Common myeloid progenitor, CD34-positive (primary cell): ENCODE measurements at regions of chr19 and their contacts with region 1.

Region 1: DNA sequence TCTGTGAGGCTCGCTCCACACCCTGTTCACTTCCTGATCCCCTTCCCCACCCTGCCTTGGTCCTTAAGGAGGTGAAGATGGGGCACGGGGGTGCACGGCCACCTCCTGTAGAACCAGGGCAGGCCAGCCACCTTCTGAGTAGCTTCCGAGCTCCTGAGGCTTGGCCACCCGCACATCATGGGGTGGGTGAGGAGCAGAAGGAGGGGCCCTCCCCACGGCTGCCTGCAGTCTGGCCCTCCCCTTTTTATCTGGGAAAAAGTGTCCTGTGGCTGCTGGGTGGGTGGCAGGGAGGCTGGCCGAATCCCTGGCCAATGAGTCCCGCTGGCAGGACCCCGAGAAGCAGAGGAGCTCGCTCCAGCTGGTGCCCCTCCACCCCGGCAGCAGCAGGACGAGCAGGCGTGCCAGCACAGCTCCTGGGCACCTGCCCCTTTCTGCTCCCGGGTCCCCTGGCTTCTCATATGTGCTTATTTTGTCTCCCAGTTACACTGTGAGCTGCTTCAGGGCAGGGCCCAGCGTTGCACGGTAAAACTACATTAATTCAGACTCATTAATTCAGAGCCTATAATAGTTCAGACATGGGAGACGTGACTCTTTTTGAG is 135.0 kb downstream of the KDM4B start:
- DNase-seq: no peak
- H3K4me3 ChIP-seq: no peak overlapping the region
- H3K27ac ChIP-seq: no peak overlapping the region
- H3K4me1 ChIP-seq: no peaks in the 10 kb centered on the region
- H3K27me3 ChIP-seq: no peaks in the 10 kb centered on the region

Region 2: DNA sequence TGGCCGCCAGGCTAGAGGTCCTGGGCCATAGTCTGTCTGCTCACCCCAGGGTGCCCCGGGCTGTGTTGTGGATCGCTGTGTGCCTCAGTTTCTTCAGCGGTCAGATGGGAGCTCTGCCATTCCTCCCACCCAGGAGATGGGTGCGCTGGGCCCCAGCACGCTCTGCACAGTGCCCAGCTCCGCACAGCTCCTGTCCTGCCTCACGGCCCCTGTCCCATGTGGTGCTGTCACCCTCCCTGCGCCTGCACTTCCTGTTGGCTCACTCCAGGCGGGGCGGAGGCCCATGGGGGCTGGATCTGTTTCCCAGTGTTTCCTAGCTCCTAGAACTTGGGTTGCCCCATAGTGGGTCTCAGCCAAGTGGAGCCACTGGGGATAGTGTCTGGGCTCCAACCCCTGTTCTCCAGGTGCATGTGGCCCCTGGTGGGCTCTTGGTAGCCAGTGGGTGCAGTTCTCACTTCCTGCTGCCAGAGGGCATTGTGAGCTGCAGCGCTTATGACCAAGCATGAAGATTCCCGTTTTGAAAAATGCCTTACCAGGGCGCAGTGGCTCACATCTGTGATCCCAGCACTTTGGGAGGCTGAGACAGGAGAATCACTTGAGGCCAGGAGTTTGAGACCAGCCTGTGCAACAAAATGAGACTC is 65.2 kb before region 1 on chr19:
- CTCF ChIA-PET with region 1: no interaction called
- POLR2A ChIA-PET with region 1: no interaction called
- DNase-seq: peak; percentile 31 to 59 (median 58)
- H3K4me3 ChIP-seq: no peak overlapping the region
- H3K27ac ChIP-seq: no peak overlapping the region
- H3K4me1 ChIP-seq: peaks cover 0 to 9% (median 3%) of the 10 kb centered on the region in 4 experiments
- H3K27me3 ChIP-seq: no peaks in the 10 kb centered on the region

Region 3: GRCh38 chr19:5118026-5118425 is 14.1 kb after region 1 on chr19:
- CTCF ChIA-PET with region 1: interaction called, 10 read pairs
- POLR2A ChIA-PET with region 1: no interaction called
- DNase-seq: no peak
- H3K4me3 ChIP-seq: no peak overlapping the region
- H3K27ac ChIP-seq: no peak overlapping the region
- H3K4me1 ChIP-seq: peaks cover 0 to 37% (median 35%) of the 10 kb centered on the region in 4 experiments
- H3K27me3 ChIP-seq: no peaks in the 10 kb centered on the region